Activated CD4-positive, alpha-beta T cell treated with anti-CD3 and anti-CD28 coated beads, Interleukin-2, amount 10 ng/mL, durations not matched to agents 24 days and 14 days (primary cell): ENCODE measurements at regions of chr12 and their contacts with region 1.

Region 1: DNA sequence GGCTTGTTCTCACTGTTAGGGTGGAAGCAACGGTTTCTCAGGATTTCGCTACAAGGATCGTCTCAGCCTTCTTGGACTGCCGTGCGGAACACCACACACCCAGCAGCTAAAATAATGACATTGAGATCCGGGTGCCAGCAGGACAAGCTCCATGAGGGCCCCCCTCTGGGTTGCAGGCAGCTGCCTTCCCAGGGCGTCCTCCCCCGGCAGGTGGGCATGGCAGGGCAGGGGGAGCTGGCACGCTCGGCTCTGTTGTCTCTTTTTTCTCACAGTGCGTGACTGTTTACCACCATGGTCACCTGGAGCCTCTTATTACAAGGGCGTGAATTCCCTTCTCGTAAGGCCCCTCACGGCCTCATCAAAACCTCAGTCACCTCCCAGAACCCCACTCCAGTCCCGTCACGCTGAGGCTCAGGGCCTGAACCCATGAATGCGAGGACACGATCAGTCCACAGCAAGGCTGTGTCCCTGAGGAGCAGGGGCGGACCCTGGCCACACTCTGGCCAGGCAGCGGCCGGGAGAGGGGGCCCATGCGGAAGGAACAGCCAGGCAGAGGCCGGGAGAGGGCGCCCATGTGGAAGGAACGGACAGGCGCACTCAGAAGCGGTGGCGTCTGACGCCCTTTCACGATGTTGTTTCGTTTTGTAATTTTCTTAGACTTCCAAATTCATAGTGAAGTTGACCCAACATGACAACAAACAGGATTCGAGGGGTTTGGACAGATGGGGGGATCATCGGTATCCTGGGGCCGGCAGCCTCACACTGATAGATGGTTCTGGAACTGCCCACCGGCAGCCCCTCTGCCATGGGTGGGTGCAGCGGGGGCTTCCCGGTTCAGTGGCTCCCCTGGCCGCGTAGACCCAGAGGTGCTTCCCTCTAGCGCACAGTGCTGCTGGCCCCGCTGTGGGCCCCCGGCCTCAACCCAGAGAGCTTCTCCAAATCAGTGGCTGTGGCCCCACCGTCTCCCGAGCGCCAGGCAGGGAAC is 10.0 kb downstream of the LRCOL1 start:
- DNase-seq: peak; percentile 78
- H3K4me3 Mint-ChIP-seq: peak overlapping the region; percentile 79
- H3K27ac Mint-ChIP-seq: no peak overlapping the region
- H3K4me1 Mint-ChIP-seq: peaks cover 14% of the 10 kb centered on the region
- H3K27me3 Mint-ChIP-seq: peaks cover 51% of the 10 kb centered on the region

Region 2: GRCh38 chr12:132523576-132524331 is 76.6 kb before region 1 on chr12:
- intact Hi-C with region 1: no loop called
- DNase-seq: peak; percentile 91
- H3K4me3 Mint-ChIP-seq: no peak overlapping the region
- H3K27ac Mint-ChIP-seq: no peak overlapping the region
- H3K4me1 Mint-ChIP-seq: no peaks in the 10 kb centered on the region
- H3K27me3 Mint-ChIP-seq: no peaks in the 10 kb centered on the region

Region 3: DNA sequence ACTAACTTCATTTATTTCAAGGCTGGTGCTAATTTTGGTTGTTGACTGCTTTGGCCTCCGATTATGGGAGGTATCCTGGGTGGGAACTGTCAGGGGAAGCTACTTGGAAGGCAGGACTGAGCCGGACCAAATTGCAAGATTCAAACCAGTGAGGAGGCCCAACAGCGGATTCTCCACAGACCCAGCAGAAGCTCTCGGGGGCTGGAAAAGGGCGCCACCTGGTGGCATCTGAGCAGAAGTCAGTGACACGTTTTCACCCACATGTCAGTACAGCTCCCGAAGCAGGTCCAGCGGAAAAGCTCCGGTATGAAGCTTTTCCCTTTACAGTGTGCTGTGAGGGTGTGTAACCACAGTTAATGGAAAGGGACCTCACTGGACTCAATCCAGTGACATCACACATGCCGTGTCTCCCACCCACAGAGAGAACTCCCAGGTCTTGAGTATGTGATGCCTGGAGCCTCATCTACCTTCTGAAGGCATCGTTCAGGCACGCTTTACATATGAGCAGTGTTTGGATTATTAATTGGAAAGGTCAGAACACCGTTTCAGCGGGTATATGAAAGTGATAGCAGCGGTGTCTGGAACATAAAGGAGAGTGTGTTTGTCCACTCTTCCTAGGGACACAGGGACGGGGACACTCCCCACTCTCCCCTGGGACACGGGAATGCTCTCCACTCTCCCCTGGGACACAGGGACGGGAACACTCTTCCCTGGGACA is 14.7 kb after region 1 on chr12:
- intact Hi-C with region 1: loop called (anchors 2 kb)
- DNase-seq: peak; percentile 93
- H3K4me3 Mint-ChIP-seq: no peak overlapping the region
- H3K27ac Mint-ChIP-seq: peak overlapping the region; percentile 54
- H3K4me1 Mint-ChIP-seq: peaks cover 4% of the 10 kb centered on the region
- H3K27me3 Mint-ChIP-seq: peaks cover 33% of the 10 kb centered on the region